ENCODE measurements at regions of chr2 and their contacts with region 1.

Region 1: DNA sequence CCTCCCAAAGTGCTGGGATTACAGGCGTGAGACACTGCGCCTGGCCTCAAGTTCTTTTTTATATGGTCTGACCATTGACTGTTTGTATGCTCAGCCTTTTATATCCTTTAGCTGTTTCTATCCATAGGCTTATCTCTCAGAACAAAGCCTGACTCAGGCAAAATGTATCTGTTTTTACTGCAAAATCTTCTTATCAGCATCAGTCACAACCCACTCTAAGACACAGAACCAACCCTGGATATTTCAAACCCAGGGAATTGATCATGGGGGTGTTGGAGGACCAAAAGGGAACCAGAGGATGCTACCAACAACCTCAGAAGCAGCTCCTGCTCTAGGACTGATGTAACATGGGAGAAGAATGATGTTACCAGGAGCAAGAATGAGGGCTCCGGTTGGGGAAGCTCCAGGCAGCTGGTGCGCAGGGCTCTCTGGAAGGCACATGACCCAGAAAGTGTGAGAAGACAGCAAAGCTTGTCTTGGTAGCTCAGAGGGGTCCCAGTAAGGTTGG is 75.3 kb upstream of the NCK2 start:
- DNase-seq: no peak
- ATAC-seq: no peak
- H3K4me3 ChIP-seq: no peak overlapping the region
- H3K27ac ChIP-seq: no peak overlapping the region
- H3K4me1 ChIP-seq: no peaks in the 10 kb centered on the region
- H3K27me3 ChIP-seq: no peaks in the 10 kb centered on the region
- CTCF ChIP-seq: no peak

Region 2: DNA sequence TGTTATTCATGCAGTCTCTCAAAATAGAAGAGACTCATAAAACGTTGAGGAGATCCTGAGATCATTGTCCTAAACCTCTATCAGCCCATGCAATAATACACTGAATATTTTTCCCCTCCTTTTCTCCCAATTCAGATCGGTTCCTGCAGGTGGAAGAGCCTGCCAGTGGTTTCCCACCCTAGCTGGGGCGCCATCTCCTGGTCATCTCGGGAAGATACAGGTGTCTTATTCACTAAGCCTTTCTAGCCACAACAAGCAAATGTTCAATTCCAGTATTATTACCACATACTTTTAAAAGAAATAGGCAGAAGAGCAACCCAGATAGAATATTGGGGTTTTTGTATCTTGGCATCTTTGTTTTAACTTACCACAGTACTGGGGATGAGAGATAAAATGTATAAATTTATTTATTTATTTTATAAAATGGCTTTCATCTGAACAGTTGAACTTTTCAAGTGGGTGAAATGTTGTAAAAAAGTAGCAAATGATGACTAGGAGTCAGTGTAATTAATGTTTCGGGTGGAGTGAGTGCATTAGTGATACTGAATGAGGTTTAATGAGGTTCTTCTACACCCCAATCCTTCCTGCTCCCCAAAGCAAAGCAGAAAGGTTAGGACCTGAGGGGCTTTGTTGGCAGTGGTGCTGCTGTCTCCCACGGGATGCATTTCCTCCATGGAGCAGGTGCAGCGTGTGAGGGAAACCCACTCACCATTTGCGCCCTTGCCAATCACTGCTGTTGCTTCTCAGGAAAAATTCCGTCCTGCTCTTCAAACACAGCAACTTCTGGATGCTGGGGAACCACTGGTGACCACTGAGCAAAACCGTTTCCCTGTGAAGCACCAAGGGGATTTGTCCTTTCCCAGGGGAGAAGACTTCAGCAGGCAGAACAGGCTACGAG is 123.5 kb before region 1 on chr2:
- CTCF ChIA-PET with region 1: no interaction called
- POLR2A ChIA-PET with region 1: no interaction called
- in situ Hi-C with region 1: no loop called
- intact Hi-C with region 1: no loop called
- DNase-seq: peak; percentile 24
- ATAC-seq: peak; percentile 86
- H3K4me3 ChIP-seq: no peak overlapping the region
- H3K27ac ChIP-seq: no peak overlapping the region; the same call in 1 of the 2 replicates
- H3K4me1 ChIP-seq: no peaks in the 10 kb centered on the region
- H3K27me3 ChIP-seq: no peaks in the 10 kb centered on the region
- CTCF ChIP-seq: peak; percentile 96

Region 3: GRCh38 chr2:105571445-105571987 is 97.9 kb before region 1 on chr2:
- CTCF ChIA-PET with region 1: no interaction called
- POLR2A ChIA-PET with region 1: no interaction called
- in situ Hi-C with region 1: no loop called
- intact Hi-C with region 1: no loop called
- DNase-seq: no peak
- ATAC-seq: no peak
- H3K4me3 ChIP-seq: no peak overlapping the region
- H3K27ac ChIP-seq: no peak overlapping the region
- H3K4me1 ChIP-seq: peaks cover 7% of the 10 kb centered on the region
- H3K27me3 ChIP-seq: no peaks in the 10 kb centered on the region
- CTCF ChIP-seq: no peak

Region 4: GRCh38 chr2:105617756-105618659 is 51.4 kb before region 1 on chr2:
- CTCF ChIA-PET with region 1: no interaction called
- POLR2A ChIA-PET with region 1: interaction called, 10 read pairs
- in situ Hi-C with region 1: no loop called
- intact Hi-C with region 1: no loop called
- DNase-seq: peak; percentile 62
- ATAC-seq: peak; percentile 84
- H3K4me3 ChIP-seq: no peak overlapping the region
- H3K27ac ChIP-seq: no peak overlapping the region
- H3K4me1 ChIP-seq: 0 out of 2 replicates have a peak, but pooled peaks cover 5% of the 10 kb centered on the region
- H3K27me3 ChIP-seq: no peaks in the 10 kb centered on the region
- CTCF ChIP-seq: no peak

Region 5: DNA sequence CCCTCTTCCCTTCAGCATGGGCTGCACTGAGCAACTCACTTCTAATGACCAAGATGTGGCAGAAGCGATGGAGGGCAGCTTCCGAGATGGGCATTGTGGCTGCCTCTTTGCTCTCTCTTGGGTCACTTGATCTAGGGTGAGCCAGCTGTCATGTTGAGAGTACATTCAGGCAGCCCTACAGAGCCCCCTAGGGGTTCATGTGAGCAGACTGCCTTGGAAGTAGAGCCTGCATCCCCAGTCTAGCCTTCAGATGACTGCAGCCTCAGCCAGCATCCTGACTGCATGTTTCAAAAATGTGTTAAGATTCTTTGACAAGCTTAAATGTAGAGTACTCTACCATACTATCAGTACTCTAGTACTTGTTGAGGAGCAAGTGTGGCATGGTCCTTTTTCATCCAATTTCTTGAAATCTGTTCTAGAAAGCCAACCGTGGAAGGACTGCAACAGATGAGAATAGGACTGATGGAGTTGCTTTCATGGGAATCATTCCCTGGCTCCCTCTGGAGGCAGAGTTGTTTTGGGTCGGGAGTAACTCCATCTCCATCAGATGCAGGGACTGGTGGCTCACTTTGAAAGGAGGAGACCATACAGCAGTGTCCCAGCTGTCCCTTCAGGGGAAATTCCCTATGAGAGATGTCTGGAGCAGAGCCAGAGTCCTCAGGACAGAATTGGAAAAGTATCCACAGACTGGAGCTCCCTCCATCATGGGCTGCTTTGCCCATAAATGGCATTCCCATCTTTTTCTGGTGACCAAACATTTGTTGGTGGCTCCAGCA is 219.4 kb after region 1 on chr2:
- CTCF ChIA-PET with region 1: no interaction called
- POLR2A ChIA-PET with region 1: no interaction called
- in situ Hi-C with region 1: no loop called
- intact Hi-C with region 1: no loop called
- DNase-seq: no peak
- ATAC-seq: peak; percentile 60; the same call in 1 of the 2 replicates
- H3K4me3 ChIP-seq: no peak overlapping the region
- H3K27ac ChIP-seq: no peak overlapping the region
- H3K4me1 ChIP-seq: no peaks in the 10 kb centered on the region
- H3K27me3 ChIP-seq: no peaks in the 10 kb centered on the region
- CTCF ChIP-seq: peak; percentile 40